ENCODE measurements at regions of chr5 and their contacts with region 1.

Region 1: GRCh38 chr5:131417240-131417869 is 153.5 kb downstream of the CDC42SE2 start:
- DNase-seq: peak; percentile 79
- ATAC-seq: no peak

Region 2: GRCh38 chr5:129904102-129904666 is 1513.2 kb before region 1 on chr5 and contains the start of gene CHSY3:
- intact Hi-C with region 1: loop called (anchors 10 kb)
- DNase-seq: peak; percentile 90
- ATAC-seq: peak; percentile 96
- total RNA-seq, gene CHSY3: 0.57 TPM

Region 3: GRCh38 chr5:131170540-131171275 is 246.6 kb before region 1 on chr5 and contains the start of gene LYRM7:
- intact Hi-C with region 1: loop called (anchors 2 kb)
- DNase-seq: peak; percentile 96
- ATAC-seq: peak; percentile 99
- total RNA-seq, gene LYRM7: 26.9 TPM

Region 4: GRCh38 chr5:131277875-131278740 is 139.2 kb before region 1 on chr5:
- intact Hi-C with region 1: no loop called
- DNase-seq: no peak
- ATAC-seq: no peak